Endothelial cell of umbilical vein (primary cell): ENCODE measurements at regions of chr20 and their contacts with region 1.

Region 1: DNA sequence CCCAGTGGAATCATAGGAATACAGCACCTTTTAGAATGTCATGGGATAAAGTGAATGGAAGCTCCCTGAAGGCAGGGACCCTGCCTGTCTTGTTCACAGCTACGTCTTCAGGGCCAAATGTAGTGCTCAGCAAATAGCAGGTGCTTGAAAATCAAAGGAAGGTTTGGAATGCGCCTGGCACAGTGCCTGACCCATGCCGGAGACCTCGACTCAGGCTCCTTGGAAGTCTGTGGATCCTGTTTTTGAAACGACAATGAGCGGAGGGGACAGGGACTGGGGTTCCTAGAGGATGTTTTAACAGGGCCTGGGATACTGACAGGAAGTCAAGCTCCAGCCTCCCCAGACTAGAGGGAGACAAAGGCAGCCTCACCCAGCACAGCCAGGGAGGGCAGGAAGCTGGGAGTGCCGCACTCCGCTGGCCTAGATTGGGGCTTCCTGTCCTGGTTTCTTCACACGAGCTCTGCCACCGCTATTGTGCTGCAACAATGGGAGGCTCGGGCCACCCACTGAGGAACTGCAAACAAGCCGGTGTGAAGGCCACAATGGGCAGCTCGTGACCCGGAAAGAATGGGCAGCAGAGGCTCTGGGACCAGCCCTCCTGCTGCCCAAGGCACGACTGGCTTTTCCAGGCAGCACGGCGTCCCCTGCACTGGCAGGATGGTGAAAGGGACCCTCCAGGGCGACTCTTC is 76.7 kb downstream of the PREX1 start:
- DNase-seq: peak; percentile 84
- H3K4me3 ChIP-seq: no peak overlapping the region
- H3K27ac ChIP-seq: peak overlapping the region; percentile 83
- H3K4me1 ChIP-seq: peaks cover 19% of the 10 kb centered on the region
- H3K27me3 ChIP-seq: no peaks in the 10 kb centered on the region
- CTCF ChIP-seq: no peak
- POLR2A ChIP-seq: no peak

Region 2: GRCh38 chr20:48706173-48707015 is 44.7 kb before region 1 on chr20:
- CTCF ChIA-PET with region 1: no interaction called
- POLR2A ChIA-PET with region 1: no interaction called
- dilution Hi-C with region 1: no loop called
- intact Hi-C with region 1: no loop called
- DNase-seq: no peak
- H3K4me3 ChIP-seq: no peak overlapping the region
- H3K27ac ChIP-seq: no peak overlapping the region
- H3K4me1 ChIP-seq: no peaks in the 10 kb centered on the region
- H3K27me3 ChIP-seq: no peaks in the 10 kb centered on the region
- CTCF ChIP-seq: no peak
- POLR2A ChIP-seq: no peak

Region 3: DNA sequence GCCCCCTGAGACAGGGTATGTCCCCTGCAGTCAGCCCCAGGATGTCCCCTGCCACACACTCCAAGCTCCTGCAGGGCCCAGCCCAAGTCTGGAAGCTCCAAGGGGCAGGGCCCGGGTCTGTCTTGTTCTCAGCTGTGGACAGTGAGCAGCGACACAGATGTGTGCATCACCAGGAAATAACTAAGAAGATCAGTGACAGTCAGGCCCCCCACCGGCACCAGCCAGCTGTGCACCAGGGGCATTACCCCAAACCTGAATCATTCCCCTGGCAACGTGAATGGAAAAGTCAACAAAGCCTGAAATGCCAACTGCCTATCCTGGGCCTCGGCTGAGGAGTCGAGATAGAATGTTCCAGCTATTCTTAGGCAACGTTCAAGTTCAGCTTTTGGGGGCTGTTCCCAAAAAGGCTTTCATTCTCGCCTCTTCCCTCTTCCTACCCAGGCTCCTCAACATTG is 28.3 kb before region 1 on chr20:
- CTCF ChIA-PET with region 1: no interaction called
- POLR2A ChIA-PET with region 1: no interaction called
- dilution Hi-C with region 1: no loop called
- intact Hi-C with region 1: loop called (anchors 2 kb)
- DNase-seq: peak; percentile 33
- H3K4me3 ChIP-seq: no peak overlapping the region
- H3K27ac ChIP-seq: peak overlapping the region; percentile 90
- H3K4me1 ChIP-seq: peaks cover 42% of the 10 kb centered on the region
- H3K27me3 ChIP-seq: no peaks in the 10 kb centered on the region
- CTCF ChIP-seq: no peak
- POLR2A ChIP-seq: no peak

Region 4: DNA sequence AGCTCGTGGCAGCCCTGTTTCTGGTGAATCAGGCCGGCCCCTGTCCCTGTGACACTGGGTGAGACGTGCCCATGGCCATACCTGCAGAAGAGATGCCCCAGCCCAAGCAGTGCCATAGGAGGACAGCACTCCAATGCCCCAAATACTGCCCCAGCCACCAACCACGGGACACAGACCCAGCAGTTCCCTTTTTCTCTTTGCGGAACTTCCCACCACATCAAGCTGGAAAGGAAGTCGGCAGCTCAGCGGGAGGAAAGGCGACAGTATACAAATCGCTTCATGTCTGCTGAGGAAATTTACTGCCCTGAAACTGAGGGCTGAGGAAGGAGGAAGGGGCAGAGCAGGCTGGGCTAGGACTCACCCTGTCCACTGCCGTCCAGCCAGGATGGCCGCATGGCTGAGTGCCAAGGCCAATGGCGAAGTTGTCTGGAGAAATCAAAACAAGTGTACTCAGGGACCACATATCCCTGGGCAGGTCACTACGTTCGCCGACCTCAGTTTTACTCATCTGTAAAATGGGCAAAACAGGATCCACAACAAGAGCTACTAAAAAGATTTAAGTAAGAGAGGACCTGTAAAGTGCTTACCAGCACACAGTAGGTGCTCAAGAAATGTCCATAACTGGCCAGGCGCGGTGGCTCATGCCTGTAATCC is 21.4 kb after region 1 on chr20:
- CTCF ChIA-PET with region 1: no interaction called
- POLR2A ChIA-PET with region 1: no interaction called
- dilution Hi-C with region 1: no loop called
- intact Hi-C with region 1: loop called (anchors 1 kb)
- DNase-seq: peak; percentile 50
- H3K4me3 ChIP-seq: no peak overlapping the region
- H3K27ac ChIP-seq: no peak overlapping the region
- H3K4me1 ChIP-seq: peaks cover 8% of the 10 kb centered on the region
- H3K27me3 ChIP-seq: no peaks in the 10 kb centered on the region
- CTCF ChIP-seq: no peak
- POLR2A ChIP-seq: no peak

Region 5: GRCh38 chr20:48791015-48791514 is 40.0 kb after region 1 on chr20:
- CTCF ChIA-PET with region 1: interaction called, 4 read pairs
- POLR2A ChIA-PET with region 1: no interaction called
- dilution Hi-C with region 1: no loop called
- intact Hi-C with region 1: loop called (anchors 1 kb)
- DNase-seq: peak; percentile 48
- H3K4me3 ChIP-seq: no peak overlapping the region
- H3K27ac ChIP-seq: no peak overlapping the region
- H3K4me1 ChIP-seq: peaks cover 18% of the 10 kb centered on the region
- H3K27me3 ChIP-seq: no peaks in the 10 kb centered on the region
- CTCF ChIP-seq: no peak
- POLR2A ChIP-seq: no peak